Lower leg skin (tissue), 4 donors: ENCODE measurements at regions of chr10 and their contacts with region 1.

Region 1: GRCh38 chr10:63120554-63120953 is 12.6 kb upstream of the NRBF2 start:
- DNase-seq: peak; percentile 62 to 66
- H3K4me3 ChIP-seq: no peak overlapping the region
- CTCF ChIP-seq: no peak
- POLR2A ChIP-seq: no peak

Region 2: GRCh38 chr10:62352356-62352970 is 768.1 kb before region 1 on chr10:
- intact Hi-C with region 1: loop called (anchors 5 kb)
- DNase-seq: no peak
- H3K4me3 ChIP-seq: no peak overlapping the region
- CTCF ChIP-seq: no peak
- POLR2A ChIP-seq: no peak

Region 3: GRCh38 chr10:63268798-63269503 is 148.4 kb after region 1 on chr10:
- intact Hi-C with region 1: no loop called
- DNase-seq: peak; percentile 96
- H3K4me3 ChIP-seq: peak overlapping the region; percentile 24
- CTCF ChIP-seq: no peak
- POLR2A ChIP-seq: no peak

Region 4: DNA sequence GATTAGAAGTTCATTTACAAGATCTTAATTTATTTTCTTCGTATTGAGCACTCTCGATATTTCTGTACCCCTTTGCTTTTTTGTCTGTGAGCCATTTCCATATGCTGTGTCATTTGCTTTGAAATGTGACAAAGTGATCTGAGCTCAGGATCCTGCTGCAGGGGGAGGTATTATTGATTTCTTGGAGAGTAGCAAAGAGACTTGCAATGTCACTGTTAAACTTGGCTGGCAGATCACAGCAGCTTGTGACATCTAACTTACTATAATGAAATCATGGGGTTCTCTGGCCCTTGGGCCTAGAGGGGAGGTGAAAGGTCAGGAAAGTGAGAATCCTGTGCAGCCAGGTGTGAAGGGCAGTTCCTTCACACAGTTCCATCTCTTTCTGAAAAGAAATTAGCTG is 1324.0 kb after region 1 on chr10:
- intact Hi-C with region 1: no loop called
- DNase-seq: no peak
- H3K4me3 ChIP-seq: no peak overlapping the region
- CTCF ChIP-seq: no peak
- POLR2A ChIP-seq: no peak